GM13977 (cell line): ENCODE measurements at regions of chr2 and their contacts with region 1.

Region 1: GRCh38 chr2:222690564-222691200 is 19.2 kb downstream of the MOGAT1 start:
- DNase-seq: peak; percentile 83
- CTCF ChIP-seq: peak; percentile 100

Region 2: GRCh38 chr2:222248256-222248655 is 442.4 kb before region 1 on chr2:
- in situ Hi-C with region 1: no loop called
- DNase-seq: no peak
- CTCF ChIP-seq: no peak

Region 3: GRCh38 chr2:222451224-222451674 is 239.4 kb before region 1 on chr2:
- in situ Hi-C with region 1: no loop called
- DNase-seq: peak; percentile 46
- CTCF ChIP-seq: peak; percentile 35

Region 4: GRCh38 chr2:222903234-222904220 is 212.8 kb after region 1 on chr2:
- in situ Hi-C with region 1: loop called (anchors 10 kb)
- DNase-seq: peak; percentile 55
- CTCF ChIP-seq: peak; percentile 77